ENCODE measurements at regions of chr22 and their contacts with region 1.

Region 1: GRCh38 chr22:41327124-41327523 is 25.8 kb downstream of the ZC3H7B start:
- DNase-seq: no peak
- H3K4me3 ChIP-seq: no peak overlapping the region
- H3K27ac ChIP-seq: no peak overlapping the region
- H3K4me1 ChIP-seq: no peaks in the 10 kb centered on the region
- H3K27me3 ChIP-seq: no peaks in the 10 kb centered on the region
- CTCF ChIP-seq: no peak
- POLR2A ChIP-seq: no peak

Region 2: GRCh38 chr22:41341990-41342389 is 14.9 kb after region 1 on chr22:
- intact Hi-C with region 1: loop called (anchors 1 kb)
- DNase-seq: no peak
- H3K4me3 ChIP-seq: no peak overlapping the region
- H3K27ac ChIP-seq: no peak overlapping the region
- H3K4me1 ChIP-seq: no peaks in the 10 kb centered on the region
- H3K27me3 ChIP-seq: no peaks in the 10 kb centered on the region
- CTCF ChIP-seq: no peak
- POLR2A ChIP-seq: no peak

Region 3: DNA sequence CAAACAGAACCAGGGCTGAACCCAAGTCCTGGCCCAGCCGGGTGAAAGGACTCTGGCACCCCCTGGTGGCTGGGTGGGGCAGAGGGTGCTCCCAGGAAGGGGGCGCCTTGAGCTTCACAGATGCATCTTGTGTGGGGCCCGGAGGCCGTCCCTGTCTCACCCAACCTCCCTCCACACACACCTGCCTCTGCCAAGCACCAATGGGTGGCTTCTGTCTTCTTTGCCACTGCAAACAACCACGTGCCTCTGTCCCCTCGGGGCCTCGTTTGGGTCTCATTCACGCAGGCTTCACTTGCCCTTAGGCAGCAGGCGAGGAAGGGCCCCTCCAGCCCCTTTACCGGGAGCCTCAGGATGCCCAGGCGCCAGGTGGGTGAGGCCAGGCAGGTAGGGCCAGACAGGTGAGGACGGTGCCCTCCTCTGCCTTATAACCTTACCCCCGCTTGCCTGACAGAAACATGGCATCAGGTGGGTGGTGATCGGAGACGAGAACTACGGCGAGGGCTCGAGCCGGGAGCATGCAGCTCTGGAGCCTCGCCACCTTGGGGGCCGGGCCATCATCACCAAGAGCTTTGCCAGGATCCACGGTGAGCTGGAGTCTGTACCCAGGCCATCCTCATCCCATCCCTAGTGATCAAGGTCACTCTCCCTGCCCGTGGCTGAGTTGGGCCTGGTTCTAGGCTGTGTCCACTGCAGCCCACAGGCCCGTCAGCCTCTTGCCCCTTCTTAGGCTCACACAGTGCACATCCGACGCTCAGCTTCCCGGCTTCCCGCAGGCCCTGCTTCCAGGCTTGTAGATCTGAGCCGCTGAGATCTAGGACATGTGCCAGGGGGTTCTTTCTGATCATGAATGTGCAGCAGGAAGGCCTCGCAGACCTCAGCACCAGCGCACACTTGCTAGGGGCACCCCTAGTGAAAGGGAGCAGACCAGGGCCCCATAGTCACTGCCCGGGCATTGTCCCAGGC is 200.0 kb after region 1 on chr22:
- intact Hi-C with region 1: no loop called
- DNase-seq: no peak
- H3K4me3 ChIP-seq: no peak overlapping the region
- H3K27ac ChIP-seq: peak overlapping the region; percentile 84 to 88
- H3K4me1 ChIP-seq: peaks cover 0 to 14% of the 10 kb centered on the region in 2 donors
- H3K27me3 ChIP-seq: no peaks in the 10 kb centered on the region
- CTCF ChIP-seq: peak; percentile 53 to 72 (median 62)
- POLR2A ChIP-seq: no peak

Measured in breast epithelium (tissue), 4 donors.